ENCODE measurements at regions of chr10 and their contacts with region 1.

Region 1: GRCh38 chr10:60208676-60209269 is 180.9 kb downstream of the ANK3 start:
- DNase-seq: no peak
- ATAC-seq: peak in 1 of 8 donors; percentile 25
- H3K4me3 ChIP-seq: no peak overlapping the region
- H3K27ac ChIP-seq: no peak overlapping the region
- H3K4me1 ChIP-seq: peaks cover 0 to 10% (median 3%) of the 10 kb centered on the region in 9 donors
- H3K27me3 ChIP-seq: no peaks in the 10 kb centered on the region
- CTCF ChIP-seq: peak; percentile 19 to 73 (median 63)

Region 2: GRCh38 chr10:60099998-60100747 is 108.6 kb before region 1 on chr10:
- intact Hi-C with region 1: loop called in 6 of 10 experiments (anchors 5 to 10 kb)
- DNase-seq: peak in 1 of 2 donors; percentile 9
- ATAC-seq: peak in 7 of 8 donors; percentile 25 to 75 (median 56)
- H3K4me3 ChIP-seq: no peak overlapping the region
- H3K27ac ChIP-seq: no peak overlapping the region
- H3K4me1 ChIP-seq: peaks cover 0 to 4% (median 0%) of the 10 kb centered on the region in 9 donors
- H3K27me3 ChIP-seq: no peaks in the 10 kb centered on the region
- CTCF ChIP-seq: peak in 8 of 9 donors; percentile 36 to 72 (median 64)

Region 3: DNA sequence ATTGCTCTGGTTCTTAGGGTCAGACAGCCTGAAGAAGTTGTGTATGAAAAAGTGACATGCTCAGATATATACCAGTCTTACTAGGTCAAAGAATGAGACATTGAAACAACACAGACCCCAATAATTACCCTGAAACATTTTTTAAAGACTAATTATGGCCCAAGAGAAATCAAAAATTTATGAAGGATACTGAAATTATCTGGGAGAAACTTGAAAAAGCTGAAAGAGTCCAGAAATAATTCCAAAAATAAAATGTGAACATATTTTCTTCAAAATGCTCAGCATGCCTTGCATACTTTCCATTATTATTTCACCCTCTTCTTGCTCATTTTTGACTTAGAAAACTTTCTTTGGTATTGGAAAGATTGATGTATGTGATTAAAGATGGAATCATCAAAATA is 103.5 kb before region 1 on chr10:
- intact Hi-C with region 1: loop called in 7 of 10 experiments (anchors 5 to 10 kb)
- DNase-seq: no peak
- ATAC-seq: no peak
- H3K4me3 ChIP-seq: no peak overlapping the region
- H3K27ac ChIP-seq: no peak overlapping the region
- H3K4me1 ChIP-seq: peaks cover 0 to 6% (median 0%) of the 10 kb centered on the region in 9 donors
- H3K27me3 ChIP-seq: no peaks in the 10 kb centered on the region
- CTCF ChIP-seq: no peak

Region 4: GRCh38 chr10:60114765-60115586 is 93.8 kb before region 1 on chr10:
- intact Hi-C with region 1: loop called in 6 of 10 experiments (anchors 5 to 10 kb)
- DNase-seq: no peak
- ATAC-seq: peak in 4 of 8 donors; percentile 51 to 74 (median 62)
- H3K4me3 ChIP-seq: no peak overlapping the region
- H3K27ac ChIP-seq: no peak overlapping the region
- H3K4me1 ChIP-seq: peaks cover 0 to 8% (median 2%) of the 10 kb centered on the region in 9 donors
- H3K27me3 ChIP-seq: no peaks in the 10 kb centered on the region
- CTCF ChIP-seq: peak in 8 of 9 donors; percentile 4 to 65 (median 56)

Region 5: GRCh38 chr10:60414805-60415585 is 206.2 kb after region 1 on chr10:
- intact Hi-C with region 1: loop called in 1 of 10 experiments (anchors 10 kb)
- DNase-seq: no peak
- ATAC-seq: no peak
- H3K4me3 ChIP-seq: no peak overlapping the region
- H3K27ac ChIP-seq: no peak overlapping the region
- H3K4me1 ChIP-seq: no peaks in the 10 kb centered on the region
- H3K27me3 ChIP-seq: no peaks in the 10 kb centered on the region
- CTCF ChIP-seq: no peak

Region 6: DNA sequence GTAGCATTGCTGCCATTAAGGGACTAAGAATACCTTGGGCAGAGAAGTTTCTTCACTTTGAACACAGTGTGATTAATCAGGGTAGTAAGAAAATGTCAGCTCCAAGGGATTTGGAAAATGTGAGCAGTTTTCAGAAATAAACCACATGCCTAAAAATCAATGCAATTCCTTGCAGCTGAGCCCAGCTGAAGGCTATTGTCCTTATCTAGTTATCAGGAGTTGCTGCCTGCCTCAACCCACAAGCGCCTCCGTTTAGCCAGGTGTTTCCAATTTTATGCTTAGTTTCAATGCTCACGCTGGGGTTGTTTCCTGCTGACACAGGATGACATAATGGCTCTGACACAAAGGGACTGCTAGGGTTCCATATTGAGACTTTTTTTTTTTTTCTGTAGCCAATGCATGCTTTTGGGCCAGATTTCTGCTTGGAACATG is 313.2 kb after region 1 on chr10:
- intact Hi-C with region 1: no loop called
- DNase-seq: no peak
- ATAC-seq: peak in 7 of 8 donors; percentile 17 to 89 (median 59)
- H3K4me3 ChIP-seq: no peak overlapping the region
- H3K27ac ChIP-seq: no peak overlapping the region
- H3K4me1 ChIP-seq: peaks cover 0 to 8% (median 0%) of the 10 kb centered on the region in 9 donors
- H3K27me3 ChIP-seq: no peaks in the 10 kb centered on the region
- CTCF ChIP-seq: no peak

Region 7: DNA sequence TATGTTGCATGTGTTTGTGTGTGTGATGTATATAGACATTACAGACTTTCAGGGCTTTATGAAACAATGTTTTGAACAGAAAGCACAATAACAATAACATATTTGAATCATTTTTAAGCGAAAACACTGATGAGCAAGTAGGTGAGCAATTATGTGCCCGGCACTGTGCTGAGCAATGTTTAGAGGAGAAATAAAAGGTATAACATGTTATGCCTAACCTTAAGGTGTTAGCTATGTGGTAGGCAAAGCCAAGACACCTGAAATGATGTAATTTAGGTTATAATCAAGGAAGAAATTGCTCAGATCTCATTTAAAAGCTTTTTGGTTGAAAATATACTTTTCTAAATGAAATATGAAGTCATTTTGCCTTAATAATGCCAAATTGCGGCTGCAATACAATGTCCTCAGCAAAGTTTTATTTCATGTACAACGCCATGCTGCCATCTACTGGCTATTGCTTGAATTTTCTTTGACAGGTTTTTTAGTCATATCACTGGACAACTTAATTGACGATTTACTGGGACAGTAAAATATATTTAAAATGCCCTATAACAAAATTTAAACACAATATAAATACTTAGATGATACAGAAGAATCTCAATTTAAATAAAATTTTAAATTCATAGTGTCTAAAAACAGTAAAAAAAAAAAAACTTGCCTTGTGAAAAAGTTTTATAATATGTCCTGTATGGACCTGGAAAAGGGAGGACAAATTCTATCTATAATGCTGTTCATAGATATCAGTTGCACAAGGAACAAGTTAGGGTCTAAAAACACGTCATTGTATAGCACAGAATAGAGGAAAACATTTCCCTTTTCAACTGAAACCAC is 438.4 kb after region 1 on chr10:
- intact Hi-C with region 1: loop called in 1 of 10 experiments (anchors 10 kb)
- DNase-seq: peak in 1 of 2 donors; percentile 39
- ATAC-seq: peak in 2 of 8 donors; percentile 42 to 64
- H3K4me3 ChIP-seq: no peak overlapping the region
- H3K27ac ChIP-seq: no peak overlapping the region
- H3K4me1 ChIP-seq: peaks cover 0 to 5% (median 0%) of the 10 kb centered on the region in 9 donors
- H3K27me3 ChIP-seq: no peaks in the 10 kb centered on the region
- CTCF ChIP-seq: peak; percentile 59 to 88 (median 76)

Measured in heart right ventricle (tissue), 16 donors.